GM12878 (cell line): ENCODE measurements at regions of chr9 and their contacts with region 1.

Region 1: GRCh38 chr9:86337469-86338108 is 16.6 kb downstream of the TUT7 start:
- DNase-seq: no peak
- ATAC-seq: peak; percentile 46
- H3K4me3 ChIP-seq: peak overlapping the region; percentile 66; the same call in 1 of the 2 replicates
- H3K27ac ChIP-seq: peak overlapping the region; percentile 62
- H3K4me1 ChIP-seq: peaks cover 50% of the 10 kb centered on the region
- H3K27me3 ChIP-seq: no peaks in the 10 kb centered on the region
- CTCF ChIP-seq: no peak
- EP300 ChIP-seq: peak in 1 of 2 experiments; percentile 16; a peak in 1 of 4 replicates
- POLR2A ChIP-seq: no peak
- RAD21 ChIP-seq: no peak

Region 2: GRCh38 chr9:85944672-85945071 is 392.9 kb before region 1 on chr9:
- CTCF ChIA-PET with region 1: no interaction called
- POLR2A ChIA-PET with region 1: no interaction called
- RAD21 ChIA-PET with region 1: no interaction called
- SMC1A ChIA-PET with region 1: no interaction called
- in situ Hi-C with region 1: no loop called
- intact Hi-C with region 1: no loop called
- DNase-seq: no peak
- ATAC-seq: no peak
- H3K4me3 ChIP-seq: peak overlapping the region; percentile 33; the same call in 1 of the 2 replicates
- H3K27ac ChIP-seq: no peak overlapping the region
- H3K4me1 ChIP-seq: peaks cover 4% of the 10 kb centered on the region; the same call in 1 of the 2 replicates
- H3K27me3 ChIP-seq: no peaks in the 10 kb centered on the region
- CTCF ChIP-seq: no peak
- EP300 ChIP-seq: no peak
- POLR2A ChIP-seq: no peak
- RAD21 ChIP-seq: no peak

Region 3: GRCh38 chr9:85960688-85961093 is 376.9 kb before region 1 on chr9:
- CTCF ChIA-PET with region 1: no interaction called
- POLR2A ChIA-PET with region 1: interaction called, 10 read pairs
- RAD21 ChIA-PET with region 1: no interaction called
- SMC1A ChIA-PET with region 1: no interaction called
- in situ Hi-C with region 1: no loop called
- intact Hi-C with region 1: no loop called
- DNase-seq: no peak
- ATAC-seq: no peak
- H3K4me3 ChIP-seq: no peak overlapping the region
- H3K27ac ChIP-seq: no peak overlapping the region
- H3K4me1 ChIP-seq: no peaks in the 10 kb centered on the region
- H3K27me3 ChIP-seq: no peaks in the 10 kb centered on the region
- CTCF ChIP-seq: no peak
- EP300 ChIP-seq: no peak
- POLR2A ChIP-seq: no peak
- RAD21 ChIP-seq: no peak

Region 4: GRCh38 chr9:86321373-86321772 is 16.2 kb before region 1 on chr9:
- CTCF ChIA-PET with region 1: interaction called, 5 read pairs
- POLR2A ChIA-PET with region 1: no interaction called
- RAD21 ChIA-PET with region 1: no interaction called
- SMC1A ChIA-PET with region 1: interaction called, 11 read pairs
- in situ Hi-C with region 1: no loop called
- intact Hi-C with region 1: no loop called
- DNase-seq: no peak
- ATAC-seq: no peak
- H3K4me3 ChIP-seq: no peak overlapping the region
- H3K27ac ChIP-seq: no peak overlapping the region
- H3K4me1 ChIP-seq: no peaks in the 10 kb centered on the region; the same call in none of the 2 replicates
- H3K27me3 ChIP-seq: no peaks in the 10 kb centered on the region
- CTCF ChIP-seq: no peak
- EP300 ChIP-seq: no peak
- POLR2A ChIP-seq: no peak
- RAD21 ChIP-seq: no peak

Region 5: GRCh38 chr9:86354011-86354817 is 16.6 kb after region 1 on chr9 and contains the start of gene TUT7:
- CTCF ChIA-PET with region 1: interaction called, 20 read pairs
- POLR2A ChIA-PET with region 1: interaction called, 30 read pairs
- RAD21 ChIA-PET with region 1: interaction called, 26 read pairs
- SMC1A ChIA-PET with region 1: interaction called, 51 read pairs
- in situ Hi-C with region 1: no loop called
- intact Hi-C with region 1: loop called (anchors 2 kb)
- DNase-seq: peak; percentile 65
- ATAC-seq: peak; percentile 83
- H3K4me3 ChIP-seq: peak within 1 kb of the TSS; percentile 99
- H3K27ac ChIP-seq: peak within 1 kb of the TSS; percentile 94
- H3K4me1 ChIP-seq: no peaks in the 10 kb centered on the region; the same call in 1 of the 2 replicates
- H3K27me3 ChIP-seq: no peaks in the 10 kb centered on the region
- CTCF ChIP-seq: no peak
- EP300 ChIP-seq: no peak
- POLR2A ChIP-seq: peak; percentile 88
- RAD21 ChIP-seq: no peak
- polyA plus RNA-seq, gene TUT7: 10.0 to 10.3 TPM